HEK293 (cell line): ENCODE measurements at regions of chr2 and their contacts with region 1.

Region 1: GRCh38 chr2:86221066-86221684 is 21.9 kb downstream of the MRPL35 start:
- H3K4me3 ChIP-seq: no peak overlapping the region
- H3K27ac ChIP-seq: no peak overlapping the region
- H3K4me1 ChIP-seq: no peaks in the 10 kb centered on the region
- CTCF ChIP-seq: peak; percentile 53; the same call in 1 of the 2 replicates

Region 2: DNA sequence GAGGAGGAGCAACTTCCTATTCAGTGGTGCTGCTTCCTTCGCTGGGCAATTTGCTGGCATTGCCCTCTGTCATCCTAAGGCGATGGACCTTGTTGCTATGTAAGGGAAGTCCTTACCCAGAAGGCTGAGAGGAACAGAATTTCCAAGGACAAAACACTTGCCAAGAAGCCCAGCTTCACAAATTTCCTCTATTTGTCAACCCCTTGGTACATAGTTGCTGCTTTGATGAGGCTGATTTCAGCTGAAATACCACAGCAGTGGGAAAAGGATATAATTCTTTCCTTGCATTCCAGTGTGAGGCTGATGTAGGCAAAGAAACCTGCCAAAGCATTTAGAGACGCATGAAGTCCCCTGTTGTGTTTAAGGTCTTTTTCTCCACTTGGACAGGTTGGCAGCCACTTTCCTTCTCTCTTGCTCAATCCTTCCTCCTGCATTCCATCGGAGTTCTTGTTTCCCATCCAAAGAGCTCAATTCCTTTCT is 315.9 kb before region 1 on chr2:
- CTCF ChIA-PET with region 1: no interaction called
- POLR2A ChIA-PET with region 1: no interaction called
- H3K4me3 ChIP-seq: no peak overlapping the region
- H3K27ac ChIP-seq: no peak overlapping the region
- H3K4me1 ChIP-seq: no peaks in the 10 kb centered on the region
- CTCF ChIP-seq: no peak

Region 3: GRCh38 chr2:86201671-86202335 is 19.4 kb before region 1 on chr2:
- CTCF ChIA-PET with region 1: interaction called, 15 read pairs
- POLR2A ChIA-PET with region 1: interaction called, 7 read pairs
- H3K4me3 ChIP-seq: no peak overlapping the region
- H3K27ac ChIP-seq: no peak overlapping the region
- H3K4me1 ChIP-seq: no peaks in the 10 kb centered on the region
- CTCF ChIP-seq: no peak

Region 4: DNA sequence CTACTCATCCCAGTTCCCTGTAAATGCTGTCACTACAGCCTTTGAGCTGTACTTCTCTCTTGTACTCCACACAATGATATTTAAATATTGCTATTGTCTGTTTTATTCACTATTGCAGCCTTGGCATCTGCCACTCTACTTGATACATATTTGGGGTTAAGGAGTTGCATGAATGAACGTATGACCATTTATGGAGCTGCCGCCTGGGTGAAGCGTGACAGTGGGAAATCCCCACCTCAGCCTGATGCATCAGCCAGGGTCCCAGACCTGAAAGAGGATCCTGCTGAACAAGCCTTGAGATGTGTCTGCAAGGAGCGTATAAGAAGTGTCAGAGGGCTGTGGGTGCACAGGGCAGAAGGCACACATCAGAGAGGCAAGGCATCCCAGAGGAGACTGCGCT is 17.2 kb after region 1 on chr2:
- CTCF ChIA-PET with region 1: interaction called, 16 read pairs
- POLR2A ChIA-PET with region 1: no interaction called
- H3K4me3 ChIP-seq: no peak overlapping the region
- H3K27ac ChIP-seq: no peak overlapping the region
- H3K4me1 ChIP-seq: no peaks in the 10 kb centered on the region; the same call in 1 of the 2 replicates
- CTCF ChIP-seq: no peak

Region 5: GRCh38 chr2:86243950-86244733 is 23.0 kb after region 1 on chr2:
- CTCF ChIA-PET with region 1: interaction called, 12 read pairs
- POLR2A ChIA-PET with region 1: no interaction called
- H3K4me3 ChIP-seq: no peak overlapping the region
- H3K27ac ChIP-seq: no peak overlapping the region
- H3K4me1 ChIP-seq: no peaks in the 10 kb centered on the region
- CTCF ChIP-seq: no peak

Region 6: DNA sequence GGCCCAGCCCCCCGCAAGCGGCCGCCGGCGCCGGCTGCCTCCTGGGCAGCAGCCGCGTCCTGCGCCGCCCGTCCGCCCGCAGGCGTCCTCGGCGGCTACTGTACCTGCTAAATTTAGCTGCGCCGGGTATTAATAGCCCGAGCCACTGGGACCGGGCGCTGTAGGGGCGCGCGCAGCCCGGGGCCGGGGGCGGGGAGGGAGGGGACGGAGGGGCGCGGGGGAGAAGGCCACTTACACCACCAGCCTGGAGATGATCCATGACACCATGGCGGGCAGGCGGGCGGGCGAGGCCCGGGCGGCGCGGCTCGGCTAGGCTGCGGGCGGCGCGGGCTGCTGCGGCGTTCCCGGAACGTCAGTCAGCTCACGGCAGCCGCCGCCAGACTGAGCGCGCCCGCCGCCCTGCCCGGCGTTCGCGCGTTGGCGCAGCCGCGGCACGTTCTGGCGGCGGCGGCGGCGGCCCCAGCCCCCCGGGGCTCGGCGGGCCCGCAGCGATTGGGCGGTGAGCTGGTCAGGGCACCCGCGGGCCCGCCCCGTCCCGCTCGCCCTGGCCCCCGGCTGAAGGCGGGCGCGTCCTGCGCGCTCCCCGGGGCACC is 116.2 kb after region 1 on chr2 and contains the start of gene REEP1:
- CTCF ChIA-PET with region 1: interaction called, 15 read pairs
- POLR2A ChIA-PET with region 1: no interaction called
- H3K4me3 ChIP-seq: peak within 1 kb of the TSS; percentile 55
- H3K27ac ChIP-seq: no peak within 1 kb of the TSS; the same call in 1 of the 2 replicates
- H3K4me1 ChIP-seq: peaks cover 7% of the 10 kb centered on the region
- CTCF ChIP-seq: no peak

Region 7: DNA sequence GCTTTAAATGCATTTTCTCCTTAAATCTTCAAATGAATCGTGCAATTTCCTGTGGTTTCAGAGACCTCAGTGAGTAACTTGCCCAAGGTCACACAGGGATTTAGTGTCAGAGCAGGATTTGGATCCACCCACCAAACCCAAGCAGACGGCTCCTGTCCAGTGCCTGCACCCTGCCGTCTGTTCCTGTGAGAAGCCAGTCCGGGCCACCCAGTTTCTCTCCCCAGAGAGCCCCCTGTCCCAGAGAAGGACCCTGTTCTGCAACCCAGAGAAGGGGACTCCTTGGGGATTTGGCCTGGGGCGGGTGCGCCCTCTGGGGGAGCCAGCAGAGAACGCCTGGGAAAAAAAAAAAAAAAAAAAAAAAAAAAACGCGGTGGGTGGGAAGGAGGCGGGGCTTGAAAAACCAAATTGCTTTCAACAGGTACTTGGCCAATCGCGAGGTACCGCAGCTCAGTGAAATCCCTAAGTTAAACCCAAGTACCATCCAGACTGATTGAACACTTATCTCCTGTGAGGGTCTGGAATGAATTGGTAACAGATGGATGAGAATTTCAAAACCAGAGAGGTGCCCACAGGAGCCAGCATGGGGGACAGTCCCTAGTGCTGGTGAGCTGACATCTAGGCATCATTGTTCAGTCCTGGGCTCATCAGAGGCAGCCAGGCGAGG is 147.1 kb after region 1 on chr2:
- CTCF ChIA-PET with region 1: interaction called, 119 read pairs
- POLR2A ChIA-PET with region 1: no interaction called
- H3K4me3 ChIP-seq: no peak overlapping the region; the same call in 1 of the 2 replicates
- H3K27ac ChIP-seq: no peak overlapping the region
- H3K4me1 ChIP-seq: no peaks in the 10 kb centered on the region
- CTCF ChIP-seq: peak; percentile 68